SK-N-SH (cell line): ENCODE measurements at regions of chr10 and their contacts with region 1.

Region 1: DNA sequence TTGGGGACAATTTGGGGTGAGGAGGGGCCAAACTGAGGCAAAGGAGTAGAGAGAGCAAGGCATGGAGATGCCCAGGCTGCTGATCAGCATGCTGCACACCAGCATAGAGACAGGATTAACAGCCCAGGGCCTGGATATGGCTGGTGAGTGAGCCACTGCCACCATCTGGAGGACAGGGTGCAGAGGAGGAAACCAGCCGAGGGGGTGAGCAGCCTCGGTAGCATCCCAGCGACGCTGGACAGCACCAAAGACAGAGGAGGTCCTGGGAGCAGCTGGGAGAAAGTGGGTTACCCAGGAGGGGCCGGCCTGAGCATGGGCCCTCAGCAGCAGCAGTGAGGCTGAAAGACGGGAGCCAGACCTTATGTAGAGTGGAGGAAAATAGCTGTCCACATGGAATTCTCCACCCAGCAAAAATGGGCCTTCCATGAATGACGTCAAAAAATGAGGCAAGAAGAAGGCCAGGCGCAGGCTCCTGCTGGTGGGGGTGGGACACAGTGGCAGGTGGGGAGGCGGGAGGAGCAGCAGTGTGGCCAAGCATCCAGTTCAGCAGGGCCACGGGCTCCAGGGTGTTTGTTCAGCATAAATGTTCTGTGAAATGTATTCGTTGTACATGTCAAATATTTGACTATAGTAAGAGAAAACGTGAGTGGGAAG is 16.7 kb downstream of the RET start:
- DNase-seq: peak; percentile 84
- H3K4me3 ChIP-seq: no peak overlapping the region
- H3K27ac ChIP-seq: peak overlapping the region in 1 of 2 experiments; percentile 56; a peak in 2 of 4 replicates
- H3K4me1 ChIP-seq: peaks cover 0 to 84% of the 10 kb centered on the region in 2 experiments; a peak in 2 of 4 replicates
- H3K27me3 ChIP-seq: no peaks in the 10 kb centered on the region
- CTCF ChIP-seq: no peak; the same call in 1 of the 2 replicates
- EP300 ChIP-seq: no peak
- RAD21 ChIP-seq: peak; percentile 64

Region 2: DNA sequence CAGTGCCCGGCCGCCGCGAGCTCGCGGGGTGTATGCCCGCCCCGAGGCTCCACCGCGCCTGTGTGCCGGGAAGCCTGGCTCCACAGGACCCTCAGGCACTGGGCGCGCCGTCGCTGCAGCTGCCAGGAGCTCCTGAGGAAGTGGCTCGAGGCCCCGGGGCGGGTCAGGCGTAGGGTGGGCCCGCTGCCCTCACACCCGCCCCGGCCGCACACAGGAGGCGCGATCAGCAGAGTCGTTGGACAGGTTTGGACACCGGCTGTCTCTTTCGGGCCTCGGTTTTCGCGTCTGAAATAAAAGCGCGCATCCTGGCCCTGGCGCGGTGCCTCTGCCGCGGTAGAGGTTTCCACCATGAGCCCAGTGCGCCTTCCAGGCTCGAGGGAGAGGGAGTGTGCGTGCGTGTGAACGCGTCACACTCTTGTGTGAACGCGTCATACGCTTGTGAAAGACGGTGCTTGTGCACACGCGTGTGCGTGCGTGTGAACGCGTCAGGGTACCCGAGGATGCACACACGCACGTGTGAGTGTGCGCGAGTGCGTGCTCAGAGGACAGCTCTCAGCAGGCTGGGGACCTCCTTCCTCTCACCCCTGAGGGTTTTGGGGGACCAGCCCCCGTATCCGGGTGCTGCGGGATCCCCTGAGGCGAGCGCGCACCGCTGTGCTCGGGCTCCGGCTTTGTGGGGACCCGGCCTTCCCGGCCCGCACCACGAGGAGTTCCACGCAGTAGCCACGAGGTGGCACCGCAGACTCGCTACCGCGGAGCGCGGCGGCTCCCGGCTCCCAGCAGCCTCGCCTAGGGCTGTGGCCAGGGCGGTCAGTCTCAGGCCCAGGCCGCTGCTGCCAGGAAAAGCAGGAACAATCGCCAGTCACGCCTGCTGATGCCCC is 227.2 kb before region 1 on chr10:
- CTCF ChIA-PET with region 1: interaction called, 31 read pairs
- POLR2A ChIA-PET with region 1: no interaction called
- DNase-seq: peak; percentile 92
- H3K4me3 ChIP-seq: no peak overlapping the region
- H3K27ac ChIP-seq: peak overlapping the region in 1 of 2 experiments; percentile 74; a peak in 2 of 4 replicates
- H3K4me1 ChIP-seq: peaks cover 0 to 43% of the 10 kb centered on the region in 2 experiments; a peak in 2 of 4 replicates
- H3K27me3 ChIP-seq: no peaks in the 10 kb centered on the region
- CTCF ChIP-seq: peak; percentile 67
- EP300 ChIP-seq: no peak
- RAD21 ChIP-seq: peak; percentile 89

Region 3: GRCh38 chr10:42872865-42873643 is 220.5 kb before region 1 on chr10:
- CTCF ChIA-PET with region 1: interaction called, 31 read pairs
- POLR2A ChIA-PET with region 1: interaction called, 3 read pairs
- DNase-seq: no peak
- H3K4me3 ChIP-seq: no peak overlapping the region
- H3K27ac ChIP-seq: peak overlapping the region in 1 of 2 experiments; percentile 99; a peak in 2 of 4 replicates
- H3K4me1 ChIP-seq: peaks cover 0 to 90% of the 10 kb centered on the region in 2 experiments; a peak in 2 of 4 replicates
- H3K27me3 ChIP-seq: no peaks in the 10 kb centered on the region
- CTCF ChIP-seq: no peak
- EP300 ChIP-seq: no peak
- RAD21 ChIP-seq: no peak